Endothelial cell of umbilical vein (primary cell): ENCODE measurements at regions of chr1 and their contacts with region 1.

Region 1: GRCh38 chr1:225318706-225319575 is 108.9 kb downstream of the LBR start:
- DNase-seq: peak; percentile 38
- H3K4me3 ChIP-seq: no peak overlapping the region
- H3K27ac ChIP-seq: no peak overlapping the region
- H3K4me1 ChIP-seq: no peaks in the 10 kb centered on the region
- H3K27me3 ChIP-seq: no peaks in the 10 kb centered on the region
- CTCF ChIP-seq: peak; percentile 66 to 69
- POLR2A ChIP-seq: no peak

Region 2: GRCh38 chr1:225329041-225329440 is 10.1 kb after region 1 on chr1:
- CTCF ChIA-PET with region 1: interaction called, 29 read pairs
- POLR2A ChIA-PET with region 1: no interaction called
- dilution Hi-C with region 1: no loop called
- intact Hi-C with region 1: no loop called
- DNase-seq: peak; percentile 33
- H3K4me3 ChIP-seq: no peak overlapping the region
- H3K27ac ChIP-seq: no peak overlapping the region
- H3K4me1 ChIP-seq: no peaks in the 10 kb centered on the region
- H3K27me3 ChIP-seq: no peaks in the 10 kb centered on the region
- CTCF ChIP-seq: no peak
- POLR2A ChIP-seq: no peak

Region 3: DNA sequence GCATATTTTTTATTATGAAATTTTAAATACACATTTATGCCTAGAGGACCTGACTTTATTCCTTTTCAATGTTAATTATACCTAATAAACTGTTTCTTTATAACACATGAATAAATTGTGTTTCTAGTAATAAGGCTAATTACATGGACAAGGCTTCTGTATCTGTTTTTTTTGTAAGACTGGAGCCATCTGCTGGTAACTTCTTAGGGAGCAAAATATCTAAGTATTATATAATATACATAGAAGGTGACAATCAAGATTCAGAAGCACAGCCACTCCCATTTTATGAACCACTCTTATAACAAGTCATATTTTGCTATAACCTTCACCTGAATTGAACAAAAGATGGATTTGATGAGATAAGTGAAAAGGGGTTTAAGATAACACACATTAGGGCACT is 24.7 kb after region 1 on chr1:
- CTCF ChIA-PET with region 1: interaction called, 55 read pairs
- POLR2A ChIA-PET with region 1: no interaction called
- dilution Hi-C with region 1: no loop called
- intact Hi-C with region 1: loop called (anchors 1 kb)
- DNase-seq: peak; percentile 27
- H3K4me3 ChIP-seq: no peak overlapping the region
- H3K27ac ChIP-seq: no peak overlapping the region
- H3K4me1 ChIP-seq: no peaks in the 10 kb centered on the region
- H3K27me3 ChIP-seq: no peaks in the 10 kb centered on the region
- CTCF ChIP-seq: no peak
- POLR2A ChIP-seq: no peak

Region 4: DNA sequence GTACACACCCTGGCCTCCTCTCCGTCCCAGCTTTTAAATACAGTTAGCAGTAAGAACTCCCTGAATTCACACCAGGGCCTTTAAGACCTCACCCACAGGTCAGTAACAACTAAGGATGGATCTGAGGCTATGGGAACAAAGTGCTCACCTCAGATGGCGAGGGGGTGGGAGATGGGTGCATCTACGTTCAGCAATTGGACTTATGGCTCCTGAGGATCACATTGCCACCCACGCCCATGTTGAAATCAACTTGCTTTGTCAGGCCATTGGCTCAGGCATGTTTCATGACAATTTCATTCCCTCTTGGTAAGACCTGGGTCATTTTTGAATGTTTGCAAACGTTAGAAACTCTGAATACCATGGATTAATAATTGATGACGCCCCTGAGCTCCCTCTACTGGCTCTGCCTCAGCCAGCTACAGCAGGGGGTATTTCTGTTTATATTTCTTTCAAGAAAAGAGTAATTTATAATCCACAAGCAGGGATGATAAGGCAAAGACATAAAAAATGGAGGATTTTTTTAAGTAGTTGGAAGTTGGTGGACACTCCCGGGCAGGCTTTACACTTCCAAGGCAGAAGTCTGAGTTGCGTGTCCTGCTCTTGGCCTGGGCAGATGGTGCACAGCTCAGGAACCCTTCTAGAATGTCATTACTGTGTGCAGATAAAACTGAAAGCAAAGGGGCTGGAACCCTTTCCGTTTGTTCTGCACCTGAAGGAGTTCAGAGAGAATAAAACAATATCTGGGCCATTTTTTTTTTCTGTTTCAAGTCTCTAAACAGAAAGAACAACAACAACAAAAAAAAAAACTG is 122.6 kb after region 1 on chr1:
- CTCF ChIA-PET with region 1: interaction called, 15 read pairs
- POLR2A ChIA-PET with region 1: no interaction called
- dilution Hi-C with region 1: no loop called
- intact Hi-C with region 1: no loop called
- DNase-seq: no peak
- H3K4me3 ChIP-seq: no peak overlapping the region
- H3K27ac ChIP-seq: no peak overlapping the region
- H3K4me1 ChIP-seq: peaks cover 33% of the 10 kb centered on the region
- H3K27me3 ChIP-seq: no peaks in the 10 kb centered on the region
- CTCF ChIP-seq: peak; percentile 20 to 22
- POLR2A ChIP-seq: no peak

Region 5: DNA sequence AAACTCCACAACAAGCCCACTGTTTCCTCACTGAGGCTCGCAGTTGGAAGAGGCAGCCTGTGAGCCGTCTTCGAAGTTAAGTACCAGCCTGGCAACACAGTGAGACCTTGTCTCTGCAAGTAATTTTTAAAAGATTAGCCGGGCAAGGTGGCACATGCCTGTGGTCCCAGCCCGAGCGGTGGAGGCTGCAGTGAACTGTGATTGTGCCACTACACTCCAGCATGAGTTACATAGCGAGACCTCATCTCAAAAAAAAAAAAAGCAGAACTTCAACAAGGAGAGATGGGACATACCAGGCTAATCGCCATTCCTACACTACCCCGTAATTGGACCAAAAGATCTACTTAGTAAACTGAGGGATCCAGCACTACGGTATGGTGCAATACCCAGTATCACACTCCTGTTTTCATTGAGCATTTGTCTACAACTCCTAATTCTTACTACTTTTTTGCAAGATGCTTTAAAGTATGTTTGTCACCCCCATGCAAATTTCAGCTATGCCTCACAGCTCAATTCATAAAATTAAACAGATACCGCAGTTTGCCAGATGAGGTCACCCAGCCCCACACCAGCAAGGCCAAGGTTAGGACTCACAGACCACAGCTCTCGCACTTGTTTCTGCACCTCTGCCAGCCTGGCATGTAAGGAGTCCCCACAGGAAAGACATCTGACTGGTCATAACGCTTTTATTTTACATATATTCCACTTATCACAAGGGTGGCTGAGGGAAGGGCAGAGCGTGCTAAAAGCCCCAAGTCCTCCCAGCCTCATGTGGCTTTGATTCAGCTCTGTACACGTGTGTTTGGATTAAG is 659.2 kb after region 1 on chr1:
- CTCF ChIA-PET with region 1: interaction called, 10 read pairs
- POLR2A ChIA-PET with region 1: no interaction called
- dilution Hi-C with region 1: no loop called
- intact Hi-C with region 1: loop called (anchors 10 kb)
- DNase-seq: no peak
- H3K4me3 ChIP-seq: no peak overlapping the region
- H3K27ac ChIP-seq: no peak overlapping the region
- H3K4me1 ChIP-seq: no peaks in the 10 kb centered on the region
- H3K27me3 ChIP-seq: no peaks in the 10 kb centered on the region
- CTCF ChIP-seq: no peak
- POLR2A ChIP-seq: no peak